Activated CD8-positive, alpha-beta memory T cell treated with anti-CD3 and anti-CD28 coated beads, Interleukin-2, amount 10 ng/mL, durations not matched to agents 7 days and 5 days (primary cell): ENCODE measurements at regions of chr7 and their contacts with region 1.

Region 1: GRCh38 chr7:155298834-155299534 is 1.3 kb downstream of the INSIG1 start:
- DNase-seq: peak; percentile 99
- ATAC-seq: peak; percentile 72
- H3K4me3 Mint-ChIP-seq: peak overlapping the region; percentile 88
- H3K27ac Mint-ChIP-seq: peak overlapping the region; percentile 97
- H3K4me1 Mint-ChIP-seq: peaks cover 61% of the 10 kb centered on the region
- H3K27me3 Mint-ChIP-seq: no peaks in the 10 kb centered on the region

Region 2: GRCh38 chr7:155190688-155191087 is 108.3 kb before region 1 on chr7:
- CTCF ChIA-PET with region 1: interaction called, 12 read pairs
- DNase-seq: peak; percentile 66
- ATAC-seq: peak; percentile 74
- H3K4me3 Mint-ChIP-seq: no peak overlapping the region
- H3K27ac Mint-ChIP-seq: no peak overlapping the region
- H3K4me1 Mint-ChIP-seq: peaks cover 46% of the 10 kb centered on the region
- H3K27me3 Mint-ChIP-seq: peaks cover 6% of the 10 kb centered on the region

Region 3: GRCh38 chr7:155205368-155206317 is 93.3 kb before region 1 on chr7:
- CTCF ChIA-PET with region 1: interaction called, 35 read pairs
- DNase-seq: peak; percentile 97
- ATAC-seq: peak; percentile 91
- H3K4me3 Mint-ChIP-seq: peak overlapping the region; percentile 86
- H3K27ac Mint-ChIP-seq: peak overlapping the region; percentile 99
- H3K4me1 Mint-ChIP-seq: peaks cover 35% of the 10 kb centered on the region
- H3K27me3 Mint-ChIP-seq: no peaks in the 10 kb centered on the region

Region 4: GRCh38 chr7:155283565-155284194 is 15.3 kb before region 1 on chr7:
- CTCF ChIA-PET with region 1: interaction called, 10 read pairs
- DNase-seq: peak; percentile 79
- ATAC-seq: peak; percentile 86
- H3K4me3 Mint-ChIP-seq: peak overlapping the region; percentile 31
- H3K27ac Mint-ChIP-seq: peak overlapping the region; percentile 76
- H3K4me1 Mint-ChIP-seq: peaks cover 75% of the 10 kb centered on the region
- H3K27me3 Mint-ChIP-seq: peaks cover 23% of the 10 kb centered on the region